ENCODE measurements at regions of chr7 and their contacts with region 1.

Region 1: DNA sequence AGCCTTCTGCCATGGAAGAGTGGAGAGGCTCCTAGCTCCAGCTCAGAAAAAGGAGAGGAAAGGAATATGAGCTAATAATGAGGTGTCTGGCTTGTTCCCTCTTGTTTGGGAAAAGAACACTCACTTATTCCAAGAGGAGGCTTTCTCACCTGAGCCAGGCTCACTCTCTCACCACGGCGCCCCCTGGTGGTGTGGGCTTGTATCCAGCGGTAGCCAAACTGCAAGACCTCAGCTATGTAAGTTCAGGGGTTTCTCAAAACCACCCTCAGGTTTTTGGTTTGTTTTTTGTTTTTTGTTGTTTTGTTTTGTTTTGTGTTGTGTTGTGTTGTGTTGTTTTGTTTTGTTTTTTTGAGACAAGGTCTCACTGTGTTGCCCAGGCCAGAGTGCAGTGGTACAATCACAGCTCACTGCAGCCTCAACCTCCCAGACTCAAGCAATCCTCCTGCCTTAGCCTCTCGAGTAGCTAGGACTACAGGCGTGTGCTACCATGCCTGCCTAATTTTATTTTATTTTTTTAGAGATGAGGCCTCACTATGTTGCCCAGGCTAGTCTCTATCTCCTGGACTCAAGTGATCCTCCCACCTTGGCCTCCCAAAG is 124.0 kb downstream of the TMEM130 start:
- DNase-seq: peak; percentile 80
- ATAC-seq: peak; percentile 57

Region 2: GRCh38 chr7:98434095-98434494 is 311.7 kb before region 1 on chr7:
- intact Hi-C with region 1: loop called (anchors 2 kb)
- DNase-seq: no peak
- ATAC-seq: no peak